ENCODE measurements at regions of chr12 and their contacts with region 1.

Region 1: GRCh38 chr12:32115404-32116104 is 8.9 kb downstream of the BICD1 start:
- DNase-seq: peak; percentile 81 to 91
- H3K4me3 ChIP-seq: no peak overlapping the region
- H3K27ac ChIP-seq: peak overlapping the region in 1 of 3 donors; percentile 24
- H3K4me1 ChIP-seq: peaks cover 10 to 11% of the 10 kb centered on the region in 2 donors
- H3K27me3 ChIP-seq: no peaks in the 10 kb centered on the region
- CTCF ChIP-seq: no peak
- POLR2A ChIP-seq: no peak

Region 2: DNA sequence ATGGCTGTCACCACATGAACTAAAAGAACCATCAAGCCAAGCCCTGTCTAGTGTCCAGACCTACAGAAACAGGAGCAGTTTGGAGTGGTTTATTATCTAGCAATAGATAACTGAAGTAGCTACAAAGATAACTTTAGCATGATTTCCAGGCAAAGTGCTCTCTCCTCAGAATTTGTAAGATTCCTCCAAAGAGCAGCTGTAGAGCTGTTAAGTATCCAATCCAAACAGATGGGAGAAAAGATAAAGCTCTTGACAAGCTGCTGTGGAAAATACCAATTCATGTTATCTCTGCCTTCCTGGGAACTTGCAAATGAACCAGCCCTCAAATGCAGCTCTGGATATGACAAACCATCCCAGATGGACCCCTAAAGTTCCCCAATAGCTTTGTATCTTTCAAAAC is 235.2 kb before region 1 on chr12:
- intact Hi-C with region 1: no loop called
- DNase-seq: no peak
- H3K4me3 ChIP-seq: no peak overlapping the region
- H3K27ac ChIP-seq: no peak overlapping the region
- H3K4me1 ChIP-seq: no peaks in the 10 kb centered on the region
- H3K27me3 ChIP-seq: no peaks in the 10 kb centered on the region
- CTCF ChIP-seq: no peak
- POLR2A ChIP-seq: no peak

Region 3: DNA sequence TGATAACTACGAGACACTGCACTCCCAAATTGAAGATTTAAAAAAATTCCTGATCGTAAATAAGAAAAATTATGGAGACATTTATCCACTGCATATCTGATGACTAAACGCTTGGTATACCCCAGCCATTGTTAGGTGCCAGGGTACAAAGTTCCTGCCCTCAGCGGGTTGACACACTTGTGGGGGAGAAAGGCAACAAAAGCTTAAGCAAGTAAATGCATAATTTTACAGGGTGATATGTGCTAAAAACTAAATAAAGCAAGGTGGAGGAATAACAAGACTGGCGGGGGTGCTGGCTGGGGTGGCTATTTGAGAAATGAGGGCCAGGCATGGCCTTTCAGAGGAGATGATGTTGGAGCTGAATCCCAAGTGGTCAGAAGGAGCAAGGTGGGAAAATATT is 16.1 kb after region 1 on chr12:
- intact Hi-C with region 1: loop called (anchors 2 kb)
- DNase-seq: no peak
- H3K4me3 ChIP-seq: no peak overlapping the region
- H3K27ac ChIP-seq: no peak overlapping the region
- H3K4me1 ChIP-seq: peaks cover 0 to 4% of the 10 kb centered on the region in 2 donors
- H3K27me3 ChIP-seq: no peaks in the 10 kb centered on the region
- CTCF ChIP-seq: no peak
- POLR2A ChIP-seq: no peak